Activated naive CD4-positive, alpha-beta T cell treated with anti-CD3 and anti-CD28 coated beads for 36 hours (primary cell): ENCODE measurements at regions of chr2 and their contacts with region 1.

Region 1: DNA sequence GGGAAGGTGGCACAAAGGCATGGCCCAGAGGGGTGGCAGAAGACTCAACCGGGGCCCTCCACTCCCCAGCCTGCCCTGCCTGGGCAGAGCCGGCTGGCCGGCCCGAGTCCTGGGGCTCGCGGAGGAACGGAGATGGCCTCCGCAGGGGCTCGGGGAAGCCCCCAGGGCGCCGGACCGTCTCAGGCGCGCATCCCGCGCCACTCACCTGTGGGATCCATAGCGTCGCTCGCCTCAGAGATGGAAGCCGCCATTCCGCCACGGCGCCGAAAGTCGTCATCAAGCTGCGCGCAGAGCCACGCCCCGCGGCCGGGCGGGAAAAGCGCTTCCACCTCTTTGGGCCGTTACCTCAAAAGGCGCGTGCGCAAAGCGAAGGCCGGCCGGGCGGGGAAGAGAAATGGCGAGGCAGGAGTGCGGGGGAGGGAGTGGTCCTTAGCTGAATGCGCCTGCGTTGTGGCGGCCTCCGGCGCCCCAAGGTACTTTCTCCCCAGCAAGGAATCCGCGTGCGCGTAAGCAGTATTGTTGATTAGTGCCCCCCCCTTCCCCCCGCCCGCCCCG is at the start of gene SMPD4:
- DNase-seq: peak; percentile 97
- H3K4me3 Mint-ChIP-seq: peak within 1 kb of the TSS; percentile 91
- H3K27ac Mint-ChIP-seq: peak within 1 kb of the TSS; percentile 94
- H3K4me1 Mint-ChIP-seq: peaks cover 31% of the 10 kb centered on the region
- H3K27me3 Mint-ChIP-seq: no peaks in the 10 kb centered on the region
- total RNA-seq, gene SMPD4: 70.8 to 71.5 TPM

Region 2: GRCh38 chr2:129877289-129877779 is 304.1 kb before region 1 on chr2:
- CTCF ChIA-PET with region 1: no interaction called
- intact Hi-C with region 1: loop called (anchors 1 kb)
- DNase-seq: peak; percentile 91
- H3K4me3 Mint-ChIP-seq: peak overlapping the region; percentile 92
- H3K27ac Mint-ChIP-seq: peak overlapping the region; percentile 89
- H3K4me1 Mint-ChIP-seq: peaks cover 6% of the 10 kb centered on the region
- H3K27me3 Mint-ChIP-seq: no peaks in the 10 kb centered on the region

Region 3: DNA sequence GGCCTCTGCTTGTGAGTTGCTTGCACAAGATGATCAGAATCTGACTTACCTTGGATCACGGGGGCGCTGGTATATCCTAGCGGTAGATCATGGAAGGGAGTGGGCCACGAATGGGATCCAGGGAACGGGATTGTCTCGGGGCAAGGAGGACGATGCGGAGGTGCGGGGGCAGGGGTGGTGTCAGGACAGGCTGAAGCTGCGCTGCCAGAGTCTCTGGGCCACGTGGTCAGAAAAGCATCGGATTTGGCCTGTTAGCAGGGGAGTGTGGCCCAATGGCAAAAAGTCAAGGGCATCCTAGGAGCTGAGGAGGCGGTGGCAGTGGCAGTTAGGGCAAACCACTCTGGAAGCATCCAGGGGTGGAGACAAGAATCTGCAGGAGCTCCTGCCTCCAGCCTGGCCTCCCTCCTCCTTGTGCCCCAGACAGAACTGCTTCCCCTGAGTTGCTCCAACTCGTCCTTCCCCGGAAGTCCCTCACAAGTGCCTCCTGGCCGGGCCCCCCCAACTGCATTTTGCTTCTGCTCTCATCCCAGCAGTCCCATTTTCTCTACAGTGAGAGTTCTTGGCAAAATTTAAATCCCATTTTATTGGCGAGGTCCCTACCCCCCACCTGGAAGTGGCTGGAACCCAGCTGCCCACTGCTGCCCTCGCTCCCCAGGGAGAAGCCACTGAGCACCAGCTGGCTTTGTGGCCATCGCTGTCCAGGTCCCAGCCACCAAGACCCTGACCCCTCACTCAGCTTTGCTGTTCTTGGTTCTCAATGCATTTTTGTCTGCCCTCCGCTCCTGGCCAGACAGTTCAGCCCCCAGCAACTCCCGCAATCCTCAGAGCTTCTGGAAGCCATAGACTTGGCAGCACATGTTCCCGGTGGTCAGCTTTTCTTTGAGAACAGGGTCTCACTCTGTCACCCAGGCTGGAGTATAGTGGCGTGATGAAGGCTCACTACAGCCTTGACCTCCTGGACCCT is 30.9 kb before region 1 on chr2:
- CTCF ChIA-PET with region 1: no interaction called
- intact Hi-C with region 1: loop called (anchors 1 kb)
- DNase-seq: no peak
- H3K4me3 Mint-ChIP-seq: no peak overlapping the region
- H3K27ac Mint-ChIP-seq: no peak overlapping the region
- H3K4me1 Mint-ChIP-seq: no peaks in the 10 kb centered on the region
- H3K27me3 Mint-ChIP-seq: peaks cover 5% of the 10 kb centered on the region

Region 4: DNA sequence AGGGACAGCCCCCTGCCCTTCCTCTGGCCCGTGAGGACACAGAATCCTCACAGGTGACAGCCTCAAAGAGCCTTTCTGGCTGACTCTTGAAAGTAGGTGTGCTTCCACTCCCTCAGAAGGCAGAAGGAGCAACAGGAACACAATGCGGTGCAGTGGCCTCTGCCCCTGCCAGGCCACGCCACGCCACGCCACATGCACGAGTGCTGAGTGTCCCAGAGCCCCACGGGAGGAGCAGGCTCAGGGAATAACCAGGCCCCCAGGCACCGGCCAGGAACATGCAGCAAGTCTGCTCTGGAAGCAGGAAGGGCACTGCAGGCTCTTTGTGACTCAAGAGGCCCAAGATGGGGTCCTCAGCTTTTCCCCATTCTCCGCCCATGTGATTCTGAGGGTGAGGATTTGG is 18.4 kb before region 1 on chr2:
- CTCF ChIA-PET with region 1: no interaction called
- intact Hi-C with region 1: no loop called
- DNase-seq: no peak
- H3K4me3 Mint-ChIP-seq: no peak overlapping the region
- H3K27ac Mint-ChIP-seq: no peak overlapping the region
- H3K4me1 Mint-ChIP-seq: no peaks in the 10 kb centered on the region
- H3K27me3 Mint-ChIP-seq: no peaks in the 10 kb centered on the region